Calu3 (cell line): ENCODE measurements at regions of chr4 and their contacts with region 1.

Region 1: DNA sequence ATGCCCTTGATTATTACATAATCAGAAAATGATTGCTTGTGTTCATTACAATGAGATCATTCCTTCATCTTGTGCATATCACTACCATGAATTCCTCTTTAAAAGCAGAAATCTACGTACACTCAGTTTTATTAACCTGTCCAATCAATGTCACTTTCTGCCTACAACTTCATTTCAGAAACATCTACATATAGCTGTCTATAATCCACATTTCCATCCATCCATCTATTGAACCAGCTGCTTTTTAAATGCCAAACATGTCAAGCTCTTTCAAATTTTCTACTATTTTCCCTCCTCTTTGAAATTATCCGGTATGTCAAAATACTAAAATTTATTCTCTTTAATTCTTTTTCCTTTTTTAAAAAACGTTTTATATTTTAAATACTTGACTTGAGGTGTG is 462.0 kb downstream of the GABRG1 start:
- DNase-seq: no peak
- H3K4me3 Mint-ChIP-seq: no peak overlapping the region
- H3K27ac Mint-ChIP-seq: no peak overlapping the region
- H3K4me1 Mint-ChIP-seq: no peaks in the 10 kb centered on the region
- H3K27me3 Mint-ChIP-seq: no peaks in the 10 kb centered on the region
- CTCF ChIP-seq: no peak

Region 2: DNA sequence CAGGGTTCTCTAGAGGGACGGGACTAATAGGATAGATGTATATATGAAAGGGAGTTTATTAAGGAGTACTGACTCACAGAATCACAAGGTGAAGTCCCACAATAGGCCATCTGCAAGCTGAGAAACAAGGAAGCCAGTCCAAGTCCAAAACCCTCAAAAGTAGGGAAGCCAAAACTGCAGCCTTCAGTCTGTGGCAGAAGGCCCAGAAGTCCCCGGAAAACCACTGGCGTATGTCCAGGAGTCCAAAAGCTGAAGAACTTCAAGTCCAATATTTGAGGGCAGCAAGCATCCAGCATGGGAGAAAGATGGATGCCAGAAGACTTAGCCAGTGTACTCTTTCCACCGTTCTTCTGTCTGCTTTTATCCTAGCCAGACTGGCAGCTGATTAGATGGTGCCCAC is 1440.5 kb before region 1 on chr4:
- CTCF ChIA-PET with region 1: interaction called, 10 read pairs
- intact Hi-C with region 1: no loop called
- DNase-seq: no peak
- H3K4me3 Mint-ChIP-seq: no peak overlapping the region
- H3K27ac Mint-ChIP-seq: no peak overlapping the region
- H3K4me1 Mint-ChIP-seq: no peaks in the 10 kb centered on the region
- H3K27me3 Mint-ChIP-seq: no peaks in the 10 kb centered on the region
- CTCF ChIP-seq: no peak